ENCODE measurements at regions of chr12 and their contacts with region 1.

Region 1: GRCh38 chr12:49043856-49044258 is 16.7 kb downstream of the KMT2D start:
- DNase-seq: peak; percentile 84
- ATAC-seq: peak; percentile 94
- H3K4me3 Mint-ChIP-seq: no peak overlapping the region
- H3K27ac Mint-ChIP-seq: no peak overlapping the region
- H3K4me1 Mint-ChIP-seq: no peaks in the 10 kb centered on the region
- H3K27me3 Mint-ChIP-seq: no peaks in the 10 kb centered on the region
- CTCF ChIP-seq: peak; percentile 86

Region 2: DNA sequence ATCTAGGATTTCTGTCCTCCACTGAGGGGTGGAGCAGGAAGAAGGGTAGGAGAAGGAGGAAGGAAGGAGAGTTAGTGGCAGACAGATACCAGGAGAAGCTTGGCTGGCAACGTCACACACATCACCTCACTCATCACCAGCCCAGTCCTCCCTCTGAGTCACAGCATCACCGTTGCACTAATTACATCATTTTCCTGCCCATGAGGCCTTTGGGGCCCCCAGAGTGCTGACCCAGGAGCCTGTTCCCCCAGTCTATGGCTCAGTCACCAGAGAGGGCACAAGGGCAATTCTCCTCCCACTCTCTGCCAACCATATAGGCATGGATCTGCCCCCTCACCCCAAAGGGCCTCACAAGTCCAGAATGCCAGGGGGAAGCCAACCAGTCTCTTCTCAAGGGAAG is 182.7 kb before region 1 on chr12:
- CTCF ChIA-PET with region 1: no interaction called
- POLR2A ChIA-PET with region 1: no interaction called
- intact Hi-C with region 1: no loop called
- DNase-seq: peak; percentile 34
- ATAC-seq: no peak
- H3K4me3 Mint-ChIP-seq: no peak overlapping the region
- H3K27ac Mint-ChIP-seq: no peak overlapping the region
- H3K4me1 Mint-ChIP-seq: peaks cover 19% of the 10 kb centered on the region
- H3K27me3 Mint-ChIP-seq: peaks cover 24% of the 10 kb centered on the region
- CTCF ChIP-seq: no peak

Region 3: DNA sequence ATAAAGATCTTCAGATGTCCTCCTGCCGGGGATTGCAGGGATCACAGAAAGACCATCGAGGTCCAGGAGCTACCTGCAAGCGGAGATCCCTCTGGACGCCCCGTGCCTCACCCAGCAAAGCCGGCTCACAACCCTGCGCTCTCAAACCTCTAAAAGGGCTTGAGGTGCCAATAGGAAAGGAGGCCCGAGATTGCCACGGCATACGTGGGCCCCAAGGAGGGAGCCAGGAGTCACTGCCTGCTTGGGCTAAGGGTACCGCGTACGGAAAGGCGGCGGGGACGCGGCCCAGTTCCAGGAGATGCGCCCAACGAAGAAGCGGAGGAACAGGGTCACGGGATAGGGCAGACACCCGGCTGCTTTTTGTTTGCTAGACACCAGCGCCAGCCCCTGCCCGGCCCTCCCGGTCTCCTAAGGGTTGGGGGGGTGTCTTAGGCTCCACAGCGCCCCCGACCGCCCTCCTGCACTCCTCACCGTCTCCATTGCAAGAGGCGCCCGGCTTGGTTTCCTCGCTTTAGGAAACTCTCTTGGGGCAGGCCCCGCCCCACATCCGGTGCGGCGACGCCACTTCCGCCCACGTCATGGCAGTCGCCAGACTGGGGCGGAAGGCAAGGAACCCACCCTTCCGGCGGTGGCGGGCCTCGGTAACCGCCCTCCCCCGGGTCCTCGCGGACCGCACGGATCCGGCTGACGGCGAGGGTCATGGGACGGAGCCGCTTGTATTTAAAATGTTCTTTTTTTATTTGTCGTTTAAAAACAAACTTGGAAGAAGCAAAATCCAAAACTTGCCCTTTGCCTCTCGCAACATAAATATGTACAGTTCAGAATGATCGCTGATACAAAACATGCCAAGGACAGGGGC is 25.4 kb before region 1 on chr12 and contains the start of gene PRKAG1:
- CTCF ChIA-PET with region 1: interaction called, 11 read pairs
- POLR2A ChIA-PET with region 1: interaction called, 4 read pairs
- intact Hi-C with region 1: no loop called
- DNase-seq: peak; percentile 96
- ATAC-seq: peak; percentile 90
- H3K4me3 Mint-ChIP-seq: peak within 1 kb of the TSS; percentile 95
- H3K27ac Mint-ChIP-seq: peak within 1 kb of the TSS; percentile 98
- H3K4me1 Mint-ChIP-seq: peaks cover 23% of the 10 kb centered on the region
- H3K27me3 Mint-ChIP-seq: no peaks in the 10 kb centered on the region
- CTCF ChIP-seq: peak; percentile 57
- total RNA-seq, gene PRKAG1: 43.3 to 47.3 TPM

Region 4: DNA sequence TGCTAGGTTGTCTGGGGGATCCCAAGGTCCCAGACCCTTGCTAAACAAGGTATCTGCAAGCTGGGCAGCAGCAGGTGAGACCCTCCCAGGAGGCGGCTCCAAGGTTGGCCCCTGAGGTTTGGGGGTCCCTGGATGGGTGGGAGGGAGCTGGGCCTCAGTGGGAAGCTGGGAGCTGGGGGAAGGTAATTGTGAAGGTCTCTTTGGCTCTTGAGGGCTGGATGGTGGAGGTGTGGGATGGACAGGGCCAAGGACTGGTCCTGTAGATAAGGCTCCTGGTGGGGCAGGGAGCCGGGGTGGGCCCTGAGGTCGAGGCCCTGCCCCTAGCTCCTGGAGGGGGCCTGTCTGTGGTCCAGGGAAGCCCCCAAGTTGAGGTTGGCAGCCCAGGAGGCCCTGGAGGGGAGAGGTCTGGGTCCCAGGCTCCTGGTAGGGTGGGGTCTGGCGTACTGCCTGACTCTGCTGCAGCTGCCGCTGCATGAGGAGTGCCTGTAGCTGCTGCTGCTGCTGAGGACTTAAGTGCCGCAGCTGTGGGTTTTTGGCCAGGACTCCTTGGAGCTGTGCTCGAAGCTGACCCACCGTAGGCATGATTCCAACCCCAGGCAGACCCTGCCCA is 12.2 kb before region 1 on chr12:
- CTCF ChIA-PET with region 1: interaction called, 35 read pairs
- POLR2A ChIA-PET with region 1: interaction called, 5 read pairs
- intact Hi-C with region 1: no loop called
- DNase-seq: no peak
- ATAC-seq: no peak
- H3K4me3 Mint-ChIP-seq: no peak overlapping the region
- H3K27ac Mint-ChIP-seq: peak overlapping the region; percentile 46
- H3K4me1 Mint-ChIP-seq: no peaks in the 10 kb centered on the region
- H3K27me3 Mint-ChIP-seq: no peaks in the 10 kb centered on the region
- CTCF ChIP-seq: no peak

Region 5: GRCh38 chr12:49069507-49070346 is 25.9 kb after region 1 on chr12 and contains the start of gene RHEBL1:
- CTCF ChIA-PET with region 1: interaction called, 56 read pairs
- POLR2A ChIA-PET with region 1: no interaction called
- intact Hi-C with region 1: no loop called
- DNase-seq: peak; percentile 100
- ATAC-seq: peak; percentile 100
- H3K4me3 Mint-ChIP-seq: peak within 1 kb of the TSS; percentile 98
- H3K27ac Mint-ChIP-seq: peak within 1 kb of the TSS; percentile 92
- H3K4me1 Mint-ChIP-seq: peaks cover 27% of the 10 kb centered on the region
- H3K27me3 Mint-ChIP-seq: no peaks in the 10 kb centered on the region
- CTCF ChIP-seq: no peak
- total RNA-seq, gene RHEBL1: 18.5 to 19.8 TPM

Measured in activated CD8-positive, alpha-beta T cell treated with anti-CD3 and anti-CD28 coated beads for 36 hours (primary cell).